ENCODE measurements at regions of chr5 and their contacts with region 1.

Region 1: GRCh38 chr5:95858661-95859326 is 36.3 kb upstream of the GLRX start:
- DNase-seq: peak; percentile 90 to 94 (median 91)
- H3K4me3 ChIP-seq: peak overlapping the region; percentile 17
- H3K27ac ChIP-seq: peak overlapping the region; percentile 56 to 83
- H3K4me1 ChIP-seq: peaks cover 13% of the 10 kb centered on the region
- H3K27me3 ChIP-seq: no peaks in the 10 kb centered on the region
- CTCF ChIP-seq: peak; percentile 97 to 100 (median 99)
- EP300 ChIP-seq: peak; percentile 91
- POLR2A ChIP-seq: peak; percentile 34

Region 2: GRCh38 chr5:95961617-95962474 is 103.1 kb after region 1 on chr5 and contains the start of gene ELL2:
- intact Hi-C with region 1: loop called in 3 of 4 experiments (anchors 2 to 5 kb)
- DNase-seq: peak; percentile 95 to 99 (median 95)
- H3K4me3 ChIP-seq: peak within 1 kb of the TSS; percentile 61
- H3K27ac ChIP-seq: peak within 1 kb of the TSS; percentile 94 to 97
- H3K4me1 ChIP-seq: peaks cover 12% of the 10 kb centered on the region
- H3K27me3 ChIP-seq: no peaks in the 10 kb centered on the region
- CTCF ChIP-seq: peak in 1 of 3 donors; percentile 43
- EP300 ChIP-seq: peak; percentile 97
- POLR2A ChIP-seq: peak; percentile 64
- total RNA-seq, gene ELL2: 15.8 to 73.2 (median 27.0) TPM

Region 3: DNA sequence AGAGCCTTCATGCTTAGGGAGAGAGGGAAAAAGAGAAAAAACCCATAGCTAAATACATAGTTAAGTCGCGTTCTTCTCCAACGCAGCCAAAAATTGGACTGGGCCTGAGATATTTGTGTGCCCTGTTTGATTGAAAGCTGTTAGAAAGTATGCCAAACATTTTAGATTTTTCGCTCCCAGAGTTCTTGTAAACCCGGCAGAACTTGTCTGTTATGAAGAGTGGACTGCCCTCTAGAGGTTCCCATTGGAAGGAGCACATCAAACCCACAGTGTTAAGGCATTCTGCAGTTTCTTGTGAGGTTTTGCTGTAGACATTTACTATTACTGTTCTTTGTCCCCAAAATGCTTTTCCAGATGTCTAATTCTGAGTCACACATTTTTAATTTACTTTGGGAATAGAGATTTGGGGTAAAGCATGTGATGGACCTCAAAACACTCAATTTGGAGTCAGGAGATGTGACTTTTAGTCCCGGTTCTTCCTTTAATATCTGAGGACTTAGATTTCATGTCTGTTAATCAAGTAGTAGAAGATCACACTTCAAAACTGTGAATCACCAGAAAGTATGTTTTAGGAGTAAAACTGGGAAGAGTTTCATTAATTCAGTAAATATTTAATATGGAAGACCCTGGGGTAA is 477.7 kb after region 1 on chr5:
- intact Hi-C with region 1: loop called (anchors 2 to 10 kb)
- DNase-seq: peak in 4 of 5 donors; percentile 38 to 76 (median 40)
- H3K4me3 ChIP-seq: no peak overlapping the region
- H3K27ac ChIP-seq: no peak overlapping the region
- H3K4me1 ChIP-seq: peaks cover 6% of the 10 kb centered on the region
- H3K27me3 ChIP-seq: no peaks in the 10 kb centered on the region
- CTCF ChIP-seq: peak; percentile 36 to 61 (median 54)
- EP300 ChIP-seq: no peak
- POLR2A ChIP-seq: no peak